ENCODE measurements at regions of chr17 and their contacts with region 1.

Region 1: GRCh38 chr17:34998205-34998604 is 17.9 kb downstream of the LIG3 start:
- DNase-seq: peak; percentile 77
- H3K4me3 ChIP-seq: no peak overlapping the region
- H3K27ac ChIP-seq: peak overlapping the region; percentile 45
- H3K4me1 ChIP-seq: no peaks in the 10 kb centered on the region
- H3K27me3 ChIP-seq: no peaks in the 10 kb centered on the region
- CTCF ChIP-seq: peak; percentile 79

Region 2: DNA sequence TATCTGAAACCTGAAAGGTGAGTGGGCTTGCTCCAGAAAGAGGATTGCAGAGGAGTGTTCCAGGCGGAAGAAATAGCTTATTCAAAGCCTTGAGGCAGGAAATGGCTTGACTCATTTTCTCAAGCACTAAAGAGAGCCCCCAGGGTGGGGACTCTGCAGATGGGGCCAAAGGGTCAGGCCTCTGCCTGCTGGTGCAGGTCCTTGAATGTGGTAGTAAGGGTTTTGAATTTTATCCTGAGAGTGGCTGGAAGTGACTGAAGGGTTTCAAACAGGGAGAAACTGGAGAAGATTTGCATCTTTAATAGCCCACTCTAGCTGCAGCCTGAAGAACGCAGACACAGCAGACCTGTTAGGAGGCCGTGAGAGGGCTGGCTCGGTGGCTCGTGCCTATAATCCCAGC is 181.4 kb before region 1 on chr17:
- intact Hi-C with region 1: loop called (anchors 10 kb)
- DNase-seq: no peak
- H3K4me3 ChIP-seq: no peak overlapping the region
- H3K27ac ChIP-seq: no peak overlapping the region
- H3K4me1 ChIP-seq: no peaks in the 10 kb centered on the region
- H3K27me3 ChIP-seq: no peaks in the 10 kb centered on the region
- CTCF ChIP-seq: no peak

Region 3: GRCh38 chr17:35063514-35064223 is 65.5 kb after region 1 on chr17 and contains the start of gene RFFL:
- intact Hi-C with region 1: no loop called
- DNase-seq: peak; percentile 90
- H3K4me3 ChIP-seq: no peak within 1 kb of the TSS
- H3K27ac ChIP-seq: peak within 1 kb of the TSS; percentile 74
- H3K4me1 ChIP-seq: peaks cover 7% of the 10 kb centered on the region
- H3K27me3 ChIP-seq: no peaks in the 10 kb centered on the region
- CTCF ChIP-seq: no peak
- total RNA-seq, gene RFFL: 48.4 to 82.5 TPM

Region 4: GRCh38 chr17:35088881-35089585 is 90.8 kb after region 1 on chr17:
- intact Hi-C with region 1: loop called (anchors 2 kb)
- DNase-seq: peak; percentile 91
- H3K4me3 ChIP-seq: peak overlapping the region; percentile 79
- H3K27ac ChIP-seq: peak overlapping the region; percentile 98
- H3K4me1 ChIP-seq: peaks cover 10% of the 10 kb centered on the region
- H3K27me3 ChIP-seq: no peaks in the 10 kb centered on the region
- CTCF ChIP-seq: peak; percentile 68

Measured in colonic mucosa (tissue), 4 donors.